ENCODE measurements at regions of chr17 and their contacts with region 1.

Region 1: GRCh38 chr17:19977311-19978208 is at the start of gene AKAP10:
- DNase-seq: peak; percentile 84 to 95 (median 88)
- ATAC-seq: peak; percentile 79 to 83
- H3K4me3 Mint-ChIP-seq: peak within 1 kb of the TSS; percentile 95 to 99 (median 97)
- H3K27ac Mint-ChIP-seq: peak within 1 kb of the TSS; percentile 93 to 98 (median 97)
- H3K4me1 Mint-ChIP-seq: peaks cover 13 to 64% (median 47%) of the 10 kb centered on the region in 4 donors
- H3K27me3 Mint-ChIP-seq: no peaks in the 10 kb centered on the region
- polyA plus RNA-seq, gene AKAP10: 15.3 to 28.5 (median 17.5) TPM

Region 2: DNA sequence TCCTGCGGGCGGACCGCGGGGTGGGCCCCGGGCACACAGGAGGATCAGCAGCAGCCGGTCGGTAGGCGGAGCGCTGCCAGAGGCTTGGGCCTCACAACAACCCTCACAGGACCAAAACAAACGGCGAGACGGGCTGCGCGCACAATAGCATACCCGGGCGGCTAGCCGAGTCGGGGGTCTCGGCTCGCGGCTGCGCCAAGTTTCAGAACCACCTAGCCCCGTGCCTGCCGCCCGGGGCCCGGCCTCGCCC is 110.6 kb before region 1 on chr17:
- POLR2A ChIA-PET with region 1: interaction called, 19 read pairs
- DNase-seq: peak in 9 of 10 donors; percentile 17 to 75 (median 39)
- ATAC-seq: peak; percentile 52 to 54
- H3K4me3 Mint-ChIP-seq: peak overlapping the region; percentile 72 to 88 (median 83)
- H3K27ac Mint-ChIP-seq: peak overlapping the region in 9 of 10 donors; percentile 35 to 89 (median 82)
- H3K4me1 Mint-ChIP-seq: peaks cover 13 to 58% (median 40%) of the 10 kb centered on the region in 4 donors
- H3K27me3 Mint-ChIP-seq: peaks cover 0 to 2% (median 0%) of the 10 kb centered on the region in 5 donors

Region 3: DNA sequence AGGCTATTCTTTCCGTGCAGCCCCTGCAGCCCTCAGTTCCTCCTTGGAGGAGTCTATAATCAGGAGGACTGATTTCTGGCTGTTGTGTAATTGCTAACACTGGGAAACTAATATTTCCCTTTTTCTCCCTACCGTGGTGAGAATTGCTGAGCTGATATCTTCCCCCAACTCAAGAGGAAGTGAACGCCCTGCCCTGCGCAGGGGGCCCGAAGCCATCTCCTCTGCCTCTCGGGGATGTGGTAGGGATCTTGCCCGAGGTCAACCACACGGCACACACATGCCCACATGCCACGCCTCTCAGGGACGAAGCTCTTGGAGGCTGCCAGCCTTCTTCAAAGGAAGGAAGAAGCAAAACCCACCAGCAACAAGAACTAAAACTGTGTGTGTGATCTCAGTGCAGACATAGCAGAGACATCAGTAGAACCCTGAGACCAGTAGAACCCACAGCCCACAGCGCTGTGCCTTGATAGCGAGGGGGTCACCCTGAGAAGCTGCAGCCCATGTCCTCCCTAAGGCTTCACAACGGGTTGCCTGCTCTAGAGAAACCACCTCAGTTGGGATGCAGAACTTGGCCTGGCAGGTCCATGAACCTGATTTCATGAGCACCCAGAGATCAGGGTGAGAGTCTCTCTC is 100.9 kb before region 1 on chr17:
- POLR2A ChIA-PET with region 1: interaction called, 10 read pairs
- DNase-seq: peak; percentile 24 to 87 (median 71)
- ATAC-seq: peak; percentile 93 to 97
- H3K4me3 Mint-ChIP-seq: peak overlapping the region; percentile 64 to 86 (median 76)
- H3K27ac Mint-ChIP-seq: peak overlapping the region; percentile 74 to 97 (median 90)
- H3K4me1 Mint-ChIP-seq: peaks cover 38 to 68% (median 60%) of the 10 kb centered on the region in 4 donors
- H3K27me3 Mint-ChIP-seq: no peaks in the 10 kb centered on the region

Region 4: GRCh38 chr17:19940722-19941464 is 36.7 kb before region 1 on chr17:
- POLR2A ChIA-PET with region 1: no interaction called
- DNase-seq: no peak
- ATAC-seq: no peak
- H3K4me3 Mint-ChIP-seq: no peak overlapping the region
- H3K27ac Mint-ChIP-seq: peak overlapping the region in 8 of 10 donors; percentile 1 to 73 (median 28)
- H3K4me1 Mint-ChIP-seq: peaks cover 17 to 50% (median 38%) of the 10 kb centered on the region in 4 donors
- H3K27me3 Mint-ChIP-seq: no peaks in the 10 kb centered on the region

Region 5: GRCh38 chr17:20043021-20043420 is 65.5 kb after region 1 on chr17:
- POLR2A ChIA-PET with region 1: no interaction called
- DNase-seq: no peak
- ATAC-seq: no peak
- H3K4me3 Mint-ChIP-seq: no peak overlapping the region
- H3K27ac Mint-ChIP-seq: peak overlapping the region in 1 of 10 donors; percentile 25
- H3K4me1 Mint-ChIP-seq: peaks cover 0 to 13% (median 4%) of the 10 kb centered on the region in 4 donors
- H3K27me3 Mint-ChIP-seq: peaks cover 0 to 22% (median 5%) of the 10 kb centered on the region in 5 donors

Region 6: GRCh38 chr17:20189302-20189701 is 211.7 kb after region 1 on chr17:
- POLR2A ChIA-PET with region 1: no interaction called
- DNase-seq: no peak
- ATAC-seq: no peak
- H3K4me3 Mint-ChIP-seq: no peak overlapping the region
- H3K27ac Mint-ChIP-seq: no peak overlapping the region
- H3K4me1 Mint-ChIP-seq: peaks cover 0 to 2% (median under 1%) of the 10 kb centered on the region in 4 donors
- H3K27me3 Mint-ChIP-seq: no peaks in the 10 kb centered on the region

Measured in naive thymus-derived CD8-positive, alpha-beta T cell (primary cell).